ENCODE measurements at regions of chr1 and their contacts with region 1.

Region 1: DNA sequence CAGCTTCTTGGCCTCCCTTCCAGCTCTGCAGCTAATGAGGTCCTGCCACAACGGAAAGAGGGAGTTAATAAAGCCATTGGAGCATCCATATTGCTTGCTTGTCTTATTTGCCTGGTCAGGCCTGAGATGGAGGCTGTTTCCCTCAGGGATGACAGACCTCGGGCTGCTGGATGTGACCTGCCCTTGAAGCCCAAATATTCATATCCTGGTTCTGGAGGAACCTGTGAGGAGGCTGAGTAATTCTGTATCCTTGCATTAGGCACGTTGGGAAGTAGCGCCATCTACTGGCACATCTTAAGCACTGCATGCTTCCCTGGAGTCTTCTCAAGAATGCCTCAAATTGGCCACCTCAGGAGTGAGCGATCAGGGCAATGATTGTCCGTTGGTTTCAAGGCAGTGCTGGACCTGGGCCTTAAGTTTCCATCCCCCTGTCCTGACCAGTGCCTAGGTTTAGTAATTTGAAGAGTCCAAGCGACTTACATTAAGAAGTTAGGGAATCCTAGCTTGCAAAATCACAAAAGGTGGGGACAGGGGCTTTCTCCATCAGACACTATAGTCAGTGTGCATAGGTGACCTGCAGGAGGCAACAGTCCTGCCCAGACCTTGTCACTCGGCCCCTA is 13.8 kb upstream of the NASP start:
- DNase-seq: peak; percentile 84
- ATAC-seq: peak; percentile 88

Region 2: DNA sequence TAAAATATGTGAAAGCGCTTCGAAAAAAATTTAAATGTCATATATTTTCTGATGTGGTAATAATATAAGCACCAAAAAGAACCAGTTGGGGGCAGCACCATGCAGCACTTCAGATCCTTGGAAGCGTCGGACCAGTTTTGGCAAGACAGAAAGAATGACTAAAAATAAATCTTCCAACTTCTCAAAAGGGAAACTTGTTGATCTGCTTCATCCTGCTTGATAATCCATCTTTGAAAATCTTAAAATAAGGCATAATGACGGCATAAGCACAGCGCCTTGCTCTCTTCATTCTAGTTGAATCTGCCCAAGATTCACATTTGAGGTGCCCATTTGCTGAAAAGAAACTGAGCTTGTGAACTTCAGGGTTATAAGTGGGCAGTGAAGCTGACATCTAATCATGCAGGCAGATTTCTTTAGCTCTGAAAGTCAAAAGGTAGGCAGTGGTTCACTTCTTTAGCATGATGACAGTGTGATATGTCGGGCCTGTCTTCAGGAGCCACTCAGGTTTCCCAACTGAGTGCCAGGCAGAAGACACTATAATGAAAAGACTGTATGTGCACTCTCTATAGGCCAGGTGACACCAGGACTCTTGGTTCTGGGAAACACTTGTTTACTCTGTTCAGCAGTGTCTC is 210.1 kb before region 1 on chr1:
- intact Hi-C with region 1: loop called (anchors 5 kb)
- DNase-seq: peak; percentile 85
- ATAC-seq: peak; percentile 90

Region 3: DNA sequence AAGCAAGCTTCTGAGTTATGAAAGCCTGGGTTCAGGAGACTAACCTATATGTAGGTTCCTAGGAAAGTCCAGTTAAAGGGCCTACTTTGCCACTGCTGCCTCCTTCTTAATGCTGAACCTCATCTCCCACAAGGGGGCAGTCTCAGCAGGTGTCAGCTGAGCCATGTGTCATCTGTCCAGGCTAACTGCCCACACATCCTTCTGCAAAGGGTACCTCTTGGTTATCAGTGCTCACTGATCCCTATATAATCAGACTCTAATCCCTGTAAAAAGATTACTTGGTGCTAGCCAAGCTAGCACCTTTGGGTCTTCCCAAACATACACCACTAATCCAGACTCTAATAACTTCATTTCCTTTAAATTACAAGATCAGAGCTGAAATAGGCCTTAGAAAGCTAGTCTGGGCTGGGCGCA is 57.4 kb before region 1 on chr1:
- intact Hi-C with region 1: loop called (anchors 10 kb)
- DNase-seq: no peak
- ATAC-seq: peak; percentile 45

Measured in sciatic nerve (tissue), 2 donors.